ENCODE measurements at regions of chr14 and their contacts with region 1.

Region 1: GRCh38 chr14:35046048-35046741 is at the start of gene FAM177A1:
- DNase-seq: peak; percentile 99
- H3K4me3 ChIP-seq: peak within 1 kb of the TSS; percentile 67 to 87 (median 82)
- H3K27ac ChIP-seq: peak within 1 kb of the TSS; percentile 93 to 98 (median 97)
- H3K4me1 ChIP-seq: peaks cover 0 to 29% (median 24%) of the 10 kb centered on the region in 4 donors
- H3K27me3 ChIP-seq: no peaks in the 10 kb centered on the region
- CTCF ChIP-seq: no peak
- EP300 ChIP-seq: peak in 2 of 4 donors; percentile 32 to 68
- POLR2A ChIP-seq: peak; percentile 62 to 91
- total RNA-seq, gene FAM177A1: 26.3 to 61.5 (median 40.8) TPM

Region 2: GRCh38 chr14:34714320-34715126 is 331.7 kb before region 1 on chr14 and contains the start of gene CFL2:
- intact Hi-C with region 1: loop called (anchors 5 kb)
- DNase-seq: peak; percentile 93
- H3K4me3 ChIP-seq: peak within 1 kb of the TSS; percentile 85 to 99 (median 95)
- H3K27ac ChIP-seq: peak within 1 kb of the TSS; percentile 93 to 100 (median 99)
- H3K4me1 ChIP-seq: peaks cover 0 to 51% (median 38%) of the 10 kb centered on the region in 4 donors
- H3K27me3 ChIP-seq: no peaks in the 10 kb centered on the region
- CTCF ChIP-seq: no peak
- EP300 ChIP-seq: peak in 1 of 4 donors; percentile 1
- POLR2A ChIP-seq: peak; percentile 67 to 87
- total RNA-seq, gene CFL2: 251 to 380 (median 284) TPM

Region 3: DNA sequence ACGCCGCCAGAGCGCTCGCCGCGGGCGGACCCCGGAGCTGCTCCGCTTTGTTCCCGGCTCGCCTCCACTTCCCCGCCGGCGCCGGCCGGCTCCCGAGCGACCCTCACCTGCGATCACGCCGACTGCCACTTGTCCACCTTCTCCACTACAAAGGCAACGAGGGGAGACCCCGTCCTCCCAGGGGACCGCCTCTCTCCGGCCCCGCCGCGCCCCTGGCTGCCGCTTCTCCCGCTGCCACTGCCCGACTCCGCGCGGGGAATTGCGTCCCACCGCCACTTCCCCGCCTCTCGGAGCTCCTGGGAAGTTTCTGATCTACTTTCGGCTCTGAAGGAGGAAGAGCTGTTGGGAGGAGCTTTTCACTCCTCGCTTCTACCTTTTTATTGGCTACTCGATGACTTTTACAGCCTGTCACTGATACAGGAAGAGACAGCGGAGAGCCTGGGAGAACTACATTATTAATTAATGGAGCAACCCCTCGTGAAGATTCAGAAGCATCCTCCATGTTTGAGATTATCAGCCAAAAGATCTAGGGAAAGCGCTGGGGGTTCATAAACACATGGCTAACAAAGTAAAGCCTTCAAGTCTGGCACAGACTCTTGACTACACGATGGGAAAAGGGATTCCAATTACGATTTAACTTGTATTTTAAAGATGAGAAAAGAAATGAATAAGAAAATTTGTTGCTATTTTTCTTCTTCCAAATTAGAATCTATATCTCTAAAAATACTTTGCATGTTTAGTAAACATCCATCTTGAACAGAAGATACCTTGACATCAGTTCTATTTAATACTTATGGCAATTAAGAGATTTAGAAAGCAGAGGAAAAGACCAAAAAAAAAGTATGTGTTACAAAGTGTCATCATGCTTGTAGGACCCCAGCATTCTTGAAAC is 170.9 kb before region 1 on chr14 and contains the start of gene BAZ1A:
- intact Hi-C with region 1: loop called (anchors 10 kb)
- DNase-seq: peak; percentile 83
- H3K4me3 ChIP-seq: peak within 1 kb of the TSS; percentile 66 to 98 (median 92)
- H3K27ac ChIP-seq: peak within 1 kb of the TSS; percentile 97 to 99 (median 98)
- H3K4me1 ChIP-seq: peaks cover 0 to 13% (median 5%) of the 10 kb centered on the region in 4 donors
- H3K27me3 ChIP-seq: no peaks in the 10 kb centered on the region
- CTCF ChIP-seq: peak in 2 of 4 experiments; percentile 15 to 25
- EP300 ChIP-seq: no peak
- POLR2A ChIP-seq: peak; percentile 71 to 88
- total RNA-seq, gene BAZ1A: 18.2 to 25.2 (median 21.6) TPM

Region 4: GRCh38 chr14:34982417-34983147 is 63.6 kb before region 1 on chr14 and contains the start of gene SRP54:
- intact Hi-C with region 1: loop called (anchors 2 kb)
- DNase-seq: peak; percentile 100
- H3K4me3 ChIP-seq: peak within 1 kb of the TSS; percentile 70 to 88 (median 78)
- H3K27ac ChIP-seq: peak within 1 kb of the TSS; percentile 93 to 98 (median 94)
- H3K4me1 ChIP-seq: peaks cover 0 to 38% (median 34%) of the 10 kb centered on the region in 4 donors
- H3K27me3 ChIP-seq: no peaks in the 10 kb centered on the region
- CTCF ChIP-seq: no peak
- EP300 ChIP-seq: no peak
- POLR2A ChIP-seq: peak; percentile 75 to 85
- total RNA-seq, gene SRP54: 29.9 to 36.1 (median 34.6) TPM

Region 5: DNA sequence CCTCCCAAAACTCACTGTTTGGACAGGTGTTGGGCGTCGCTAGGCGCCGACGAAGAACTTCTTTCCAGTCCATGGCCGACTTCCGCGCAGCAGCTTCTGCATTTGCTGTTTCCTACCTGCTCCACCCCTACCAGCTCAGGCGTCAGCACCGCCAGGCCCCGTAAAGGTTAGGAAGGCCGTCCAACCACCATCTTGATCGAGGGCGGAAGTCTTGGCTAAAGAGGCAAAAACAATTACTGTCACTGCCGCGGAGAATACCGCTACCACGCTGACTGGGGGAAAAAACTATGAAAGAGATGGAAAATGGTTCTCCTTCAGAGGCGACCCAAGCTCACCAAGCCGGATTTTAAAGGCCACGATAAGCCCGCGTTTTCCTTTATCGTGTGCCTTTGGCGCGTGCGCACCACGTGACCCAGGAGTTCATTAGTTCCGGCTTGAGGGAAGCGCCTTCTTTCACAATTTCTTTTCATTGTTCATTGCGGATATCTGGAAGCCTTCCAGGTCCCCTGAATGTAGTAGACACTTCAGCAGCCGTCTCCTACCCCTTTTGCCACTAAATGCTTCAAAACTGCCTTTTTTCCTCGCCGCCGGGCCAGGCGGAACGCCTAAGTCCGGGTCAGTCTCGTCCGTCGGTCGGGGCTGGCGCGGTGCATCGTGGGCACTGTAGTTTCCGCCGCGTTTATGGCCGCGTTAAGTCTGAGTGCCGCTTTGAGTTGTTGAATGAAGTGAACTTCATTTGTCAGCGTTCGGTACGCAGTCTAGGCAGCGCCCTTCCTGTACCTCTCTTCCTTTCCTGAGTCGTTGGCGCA is 75.9 kb after region 1 on chr14 and contains the starts of genes PPP2R3C and PRORP:
- intact Hi-C with region 1: loop called (anchors 5 kb)
- DNase-seq: peak; percentile 96
- H3K4me3 ChIP-seq: peak within 1 kb of the TSS; percentile 68 to 70 (median 69)
- H3K27ac ChIP-seq: peak within 1 kb of the TSS; percentile 90 to 98 (median 94)
- H3K4me1 ChIP-seq: peaks cover 0 to 41% (median 26%) of the 10 kb centered on the region in 4 donors
- H3K27me3 ChIP-seq: no peaks in the 10 kb centered on the region
- CTCF ChIP-seq: no peak
- EP300 ChIP-seq: no peak
- POLR2A ChIP-seq: peak; percentile 45 to 70
- total RNA-seq, gene PPP2R3C: 25.3 to 44.3 (median 40.5) TPM
- total RNA-seq, gene PRORP: 7.9 to 17.1 (median 13.6) TPM

Region 6: DNA sequence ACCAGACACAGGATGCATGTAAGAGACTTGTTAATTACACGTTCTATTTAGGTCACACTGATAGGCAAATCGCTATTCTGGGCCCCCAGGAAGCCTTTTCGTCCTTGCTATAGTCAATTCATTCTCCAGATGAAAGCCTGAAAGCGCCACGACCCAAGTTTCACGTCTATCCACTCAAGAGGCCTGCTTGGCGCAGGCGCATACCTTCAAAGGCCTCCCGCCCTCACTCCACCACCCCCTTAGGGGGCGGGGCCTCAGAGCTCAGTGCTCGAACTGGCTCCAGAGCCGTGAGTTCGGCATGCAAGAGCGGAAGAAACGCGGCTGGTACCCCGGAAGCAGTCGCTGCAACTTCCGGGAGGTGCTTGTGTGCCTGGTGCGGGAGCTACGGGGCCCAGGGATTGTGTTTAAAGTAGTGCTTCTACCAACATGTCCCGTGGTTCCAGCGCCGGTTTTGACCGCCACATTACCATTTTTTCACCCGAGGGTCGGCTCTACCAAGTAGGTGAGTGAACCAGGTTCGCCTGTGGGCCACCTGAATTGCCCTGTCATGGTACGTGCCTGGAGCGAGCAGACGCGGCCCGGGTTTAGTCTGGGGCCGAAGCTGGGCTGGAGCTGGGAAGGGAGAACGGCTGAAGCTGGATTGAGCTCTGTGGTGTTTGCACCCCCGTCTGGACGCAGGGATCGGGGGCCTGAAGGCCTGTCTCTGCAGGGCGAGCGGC is 246.0 kb after region 1 on chr14 and contains the start of gene PSMA6:
- intact Hi-C with region 1: loop called (anchors 10 kb)
- DNase-seq: peak; percentile 99
- H3K4me3 ChIP-seq: peak within 1 kb of the TSS; percentile 77 to 89 (median 80)
- H3K27ac ChIP-seq: peak within 1 kb of the TSS; percentile 89 to 96 (median 92)
- H3K4me1 ChIP-seq: peaks cover 0 to 49% (median 40%) of the 10 kb centered on the region in 4 donors
- H3K27me3 ChIP-seq: no peaks in the 10 kb centered on the region
- CTCF ChIP-seq: no peak
- EP300 ChIP-seq: peak in 1 of 4 donors; percentile 70
- POLR2A ChIP-seq: peak; percentile 81 to 86
- total RNA-seq, gene PSMA6: 104 to 203 (median 169) TPM

Region 7: DNA sequence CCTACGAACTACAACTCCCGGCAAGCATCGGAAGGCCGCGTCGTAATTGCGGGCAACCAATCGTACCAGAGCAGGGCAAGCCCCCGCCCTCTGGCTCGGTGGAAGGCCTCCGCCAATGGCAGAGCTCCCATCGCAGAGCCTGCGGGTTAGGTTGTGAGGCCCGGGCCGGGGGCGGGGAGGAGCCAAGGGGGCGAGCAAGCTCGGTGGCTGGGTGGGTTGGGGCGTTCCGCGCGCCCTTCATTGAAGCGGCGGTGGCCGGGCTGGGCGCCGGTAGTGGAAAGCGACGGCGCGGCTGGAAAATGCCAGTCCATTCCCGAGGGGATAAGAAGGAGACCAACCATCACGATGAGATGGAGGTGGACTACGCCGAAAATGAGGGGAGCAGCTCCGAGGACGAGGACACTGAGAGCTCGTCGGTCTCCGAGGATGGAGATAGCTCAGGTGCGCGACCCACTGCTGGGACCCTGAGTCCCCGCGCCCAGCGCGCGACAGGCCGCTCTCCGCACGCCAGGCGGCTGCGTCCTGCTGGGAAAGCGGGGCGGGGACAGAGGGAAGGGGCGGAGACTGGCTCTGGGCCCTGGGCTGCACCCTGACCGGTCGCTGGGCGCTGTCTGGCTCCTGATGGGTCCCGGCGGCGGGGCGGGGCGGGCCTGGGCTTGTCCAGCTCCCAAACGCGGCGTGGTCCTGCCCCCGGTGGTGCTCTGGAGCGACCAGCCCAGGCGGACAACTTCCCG is 780.2 kb after region 1 on chr14 and contains the start of gene BRMS1L:
- intact Hi-C with region 1: loop called (anchors 10 kb)
- DNase-seq: peak; percentile 99
- H3K4me3 ChIP-seq: peak within 1 kb of the TSS; percentile 65 to 94 (median 88)
- H3K27ac ChIP-seq: peak within 1 kb of the TSS; percentile 95 to 99 (median 98)
- H3K4me1 ChIP-seq: peaks cover 0 to 13% (median 8%) of the 10 kb centered on the region in 4 donors
- H3K27me3 ChIP-seq: no peaks in the 10 kb centered on the region
- CTCF ChIP-seq: no peak
- EP300 ChIP-seq: no peak
- POLR2A ChIP-seq: peak; percentile 80 to 85
- total RNA-seq, gene BRMS1L: 5.8 to 10.5 (median 9.7) TPM